K562 (cell line): ENCODE measurements at regions of chr7 and their contacts with region 1.

Region 1: GRCh38 chr7:73578342-73579127 is at the start of gene TBL2:
- DNase-seq: peak; percentile 96 to 100 (median 98)
- ATAC-seq: peak; percentile 91
- H3K4me3 ChIP-seq: peak within 1 kb of the TSS; percentile 70
- H3K27ac ChIP-seq: peak within 1 kb of the TSS; percentile 87
- H3K4me1 ChIP-seq: peaks cover 34 to 61% of the 10 kb centered on the region in 2 experiments
- H3K27me3 ChIP-seq: no peaks in the 10 kb centered on the region
- CTCF ChIP-seq: peak in 2 of 3 experiments; percentile 57 to 64; a peak in 4 of 6 replicates
- EP300 ChIP-seq: peak; percentile 72
- POLR2A ChIP-seq: peak; percentile 96
- RAD21 ChIP-seq: peak in 1 of 2 experiments; percentile 19; a peak in 1 of 4 replicates
- polyA plus RNA-seq, gene TBL2: 2.5 to 3.0 TPM

Region 2: GRCh38 chr7:73382934-73383503 is 195.5 kb before region 1 on chr7:
- CTCF ChIA-PET with region 1: no interaction called
- POLR2A ChIA-PET with region 1: no interaction called
- in situ Hi-C with region 1: no loop called
- intact Hi-C with region 1: no loop called
- DNase-seq: no peak
- ATAC-seq: no peak
- H3K4me3 ChIP-seq: no peak overlapping the region
- H3K27ac ChIP-seq: no peak overlapping the region
- H3K4me1 ChIP-seq: no peaks in the 10 kb centered on the region
- H3K27me3 ChIP-seq: peaks cover 4 to 22% of the 10 kb centered on the region in 2 experiments; a peak in 3 of 5 replicates
- CTCF ChIP-seq: no peak
- EP300 ChIP-seq: no peak
- POLR2A ChIP-seq: no peak
- RAD21 ChIP-seq: no peak

Region 3: GRCh38 chr7:73557108-73557396 is 21.5 kb before region 1 on chr7:
- CTCF ChIA-PET with region 1: no interaction called
- POLR2A ChIA-PET with region 1: interaction called, 4 read pairs
- in situ Hi-C with region 1: no loop called
- intact Hi-C with region 1: loop called (anchors 1 kb)
- DNase-seq: peak; percentile 97 to 99 (median 97)
- ATAC-seq: peak; percentile 96
- H3K4me3 ChIP-seq: peak overlapping the region; percentile 95
- H3K27ac ChIP-seq: peak overlapping the region; percentile 99
- H3K4me1 ChIP-seq: peaks cover 28 to 33% of the 10 kb centered on the region in 2 experiments
- H3K27me3 ChIP-seq: no peaks in the 10 kb centered on the region
- CTCF ChIP-seq: no peak
- EP300 ChIP-seq: no peak; the same call in 1 of the 2 replicates
- POLR2A ChIP-seq: no peak
- RAD21 ChIP-seq: no peak

Region 4: GRCh38 chr7:73565675-73566340 is 12.7 kb before region 1 on chr7:
- CTCF ChIA-PET with region 1: no interaction called
- POLR2A ChIA-PET with region 1: interaction called, 72 read pairs
- in situ Hi-C with region 1: no loop called
- intact Hi-C with region 1: loop called (anchors 1 kb)
- DNase-seq: no peak
- ATAC-seq: no peak
- H3K4me3 ChIP-seq: no peak overlapping the region
- H3K27ac ChIP-seq: no peak overlapping the region
- H3K4me1 ChIP-seq: peaks cover 20 to 28% of the 10 kb centered on the region in 2 experiments
- H3K27me3 ChIP-seq: no peaks in the 10 kb centered on the region
- CTCF ChIP-seq: no peak
- EP300 ChIP-seq: no peak
- POLR2A ChIP-seq: no peak
- RAD21 ChIP-seq: no peak